ENCODE measurements at regions of chr1 and their contacts with region 1.

Region 1: GRCh38 chr1:30911046-30911954 is 2.7 kb upstream of the SDC3 start:
- DNase-seq: peak; percentile 78
- ATAC-seq: peak; percentile 70
- H3K4me3 ChIP-seq: no peak overlapping the region
- H3K27ac ChIP-seq: no peak overlapping the region
- H3K4me1 ChIP-seq: peaks cover 20% of the 10 kb centered on the region
- H3K27me3 ChIP-seq: no peaks in the 10 kb centered on the region
- CTCF ChIP-seq: peak; percentile 96
- POLR2A ChIP-seq: peak; percentile 62; the same call in 1 of the 2 replicates
- RAD21 ChIP-seq: peak; percentile 99

Region 2: GRCh38 chr1:30718636-30719405 is 192.5 kb before region 1 on chr1:
- CTCF ChIA-PET with region 1: interaction called, 4 read pairs
- POLR2A ChIA-PET with region 1: no interaction called
- dilution Hi-C with region 1: no loop called
- in situ Hi-C with region 1: no loop called
- intact Hi-C with region 1: loop called (anchors 1 kb)
- DNase-seq: peak; percentile 98
- ATAC-seq: peak; percentile 82
- H3K4me3 ChIP-seq: peak overlapping the region; percentile 50
- H3K27ac ChIP-seq: peak overlapping the region; percentile 84
- H3K4me1 ChIP-seq: peaks cover 4% of the 10 kb centered on the region; the same call in 1 of the 2 replicates
- H3K27me3 ChIP-seq: no peaks in the 10 kb centered on the region
- CTCF ChIP-seq: peak; percentile 88; the same call in 1 of the 2 replicates
- POLR2A ChIP-seq: peak; percentile 73
- RAD21 ChIP-seq: 0 out of 2 replicates have a peak, but pooled peaks have one; percentile 97

Region 3: DNA sequence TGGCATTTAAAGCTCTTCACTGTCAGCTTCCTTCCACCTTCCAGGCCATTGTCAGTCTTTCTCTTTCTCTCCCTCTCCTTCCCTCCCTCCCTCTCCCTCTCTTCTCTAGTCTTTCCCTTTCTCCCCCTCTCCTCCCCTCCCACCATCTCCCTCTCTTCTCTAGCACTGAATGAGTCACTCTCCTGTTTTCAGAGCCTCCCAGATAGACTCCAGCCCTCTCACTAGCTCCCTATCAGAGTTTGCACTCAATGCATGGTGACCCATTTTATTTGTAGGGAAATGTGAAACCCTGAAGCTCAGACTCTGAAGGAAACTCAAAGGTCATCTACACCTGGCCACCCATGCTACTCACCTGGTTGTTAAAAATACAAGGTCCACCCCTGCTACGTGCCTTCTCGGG is 183.5 kb before region 1 on chr1:
- CTCF ChIA-PET with region 1: no interaction called
- POLR2A ChIA-PET with region 1: no interaction called
- dilution Hi-C with region 1: no loop called
- in situ Hi-C with region 1: loop called (anchors 5 kb)
- intact Hi-C with region 1: no loop called
- DNase-seq: peak; percentile 66
- ATAC-seq: peak; percentile 94
- H3K4me3 ChIP-seq: no peak overlapping the region
- H3K27ac ChIP-seq: no peak overlapping the region
- H3K4me1 ChIP-seq: peaks cover 10% of the 10 kb centered on the region; the same call in 1 of the 2 replicates
- H3K27me3 ChIP-seq: peaks cover 7% of the 10 kb centered on the region; the same call in 1 of the 2 replicates
- CTCF ChIP-seq: no peak
- POLR2A ChIP-seq: no peak
- RAD21 ChIP-seq: no peak

Region 4: GRCh38 chr1:30779294-30780071 is 131.8 kb before region 1 on chr1:
- CTCF ChIA-PET with region 1: interaction called, 12 read pairs
- POLR2A ChIA-PET with region 1: no interaction called
- dilution Hi-C with region 1: no loop called
- in situ Hi-C with region 1: no loop called
- intact Hi-C with region 1: loop called (anchors 1 kb)
- DNase-seq: peak; percentile 48
- ATAC-seq: peak; percentile 74
- H3K4me3 ChIP-seq: no peak overlapping the region
- H3K27ac ChIP-seq: no peak overlapping the region
- H3K4me1 ChIP-seq: no peaks in the 10 kb centered on the region
- H3K27me3 ChIP-seq: no peaks in the 10 kb centered on the region; the same call in 1 of the 2 replicates
- CTCF ChIP-seq: peak; percentile 93
- POLR2A ChIP-seq: no peak
- RAD21 ChIP-seq: peak; percentile 84

Region 5: DNA sequence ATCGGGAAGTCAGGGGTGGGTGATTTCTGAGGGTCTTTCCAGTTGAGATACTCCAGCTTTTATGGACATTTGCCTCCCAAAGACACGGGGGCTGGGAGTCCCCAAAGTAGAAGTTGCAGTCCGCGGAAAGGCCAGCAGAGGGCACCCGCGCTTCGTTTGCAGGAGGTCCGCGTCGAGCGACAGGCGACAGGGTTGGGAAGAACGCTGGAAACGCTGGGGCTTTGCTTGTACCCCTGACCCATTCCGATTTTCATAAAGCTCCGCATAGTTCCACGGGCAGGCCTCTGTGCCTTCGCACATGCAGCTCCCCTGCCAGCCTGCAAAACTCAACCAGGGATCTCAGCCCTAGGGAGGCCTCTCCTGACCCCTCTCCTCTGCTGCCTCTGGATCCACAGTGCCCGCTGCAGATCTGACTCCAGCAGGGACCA is 109.5 kb before region 1 on chr1:
- CTCF ChIA-PET with region 1: interaction called, 122 read pairs
- POLR2A ChIA-PET with region 1: no interaction called
- dilution Hi-C with region 1: loop called (anchors 25 kb)
- in situ Hi-C with region 1: loop called (anchors 5 kb)
- intact Hi-C with region 1: loop called (anchors 1 kb)
- DNase-seq: peak; percentile 48
- ATAC-seq: peak; percentile 91
- H3K4me3 ChIP-seq: no peak overlapping the region
- H3K27ac ChIP-seq: no peak overlapping the region
- H3K4me1 ChIP-seq: peaks cover 9% of the 10 kb centered on the region; the same call in 1 of the 2 replicates
- H3K27me3 ChIP-seq: no peaks in the 10 kb centered on the region
- CTCF ChIP-seq: peak; percentile 96
- POLR2A ChIP-seq: peak; percentile 45; the same call in 1 of the 2 replicates
- RAD21 ChIP-seq: peak; percentile 98

Region 6: DNA sequence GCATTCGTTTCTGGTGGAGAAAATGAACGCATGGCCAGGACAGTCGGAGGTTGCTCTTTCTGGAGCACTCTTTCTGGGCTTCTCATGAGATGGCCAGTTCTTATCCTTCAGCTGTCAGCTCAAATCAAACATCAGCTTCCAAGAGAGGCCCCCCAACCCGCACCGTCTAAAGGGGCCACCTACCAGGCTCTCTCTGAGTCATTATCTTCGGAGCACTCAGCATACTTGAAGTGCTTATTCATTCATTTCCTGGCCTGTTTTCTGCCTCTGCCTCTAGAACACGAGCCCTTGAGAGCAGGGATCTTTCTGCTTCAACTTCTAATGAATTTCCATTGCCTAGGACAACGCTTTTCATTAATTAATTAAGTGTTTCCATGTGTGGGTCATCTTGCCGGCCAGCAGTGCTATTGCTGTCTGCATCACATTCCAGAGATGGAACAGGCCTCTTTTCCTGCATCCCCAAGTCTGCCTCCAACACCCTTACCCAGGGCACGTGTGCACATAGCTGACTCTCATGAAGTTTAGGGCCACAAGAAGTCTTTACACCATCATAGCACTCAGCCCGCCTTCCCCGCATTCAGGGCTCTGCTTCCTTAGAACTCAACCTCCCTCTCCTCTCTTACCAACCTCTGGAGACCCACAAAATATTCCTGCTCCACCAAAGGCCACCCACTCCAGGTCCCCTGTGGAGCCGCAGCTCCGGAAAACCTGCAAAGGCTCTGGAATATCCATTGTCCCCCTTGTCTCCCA is 101.6 kb before region 1 on chr1:
- CTCF ChIA-PET with region 1: interaction called, 122 read pairs
- POLR2A ChIA-PET with region 1: no interaction called
- dilution Hi-C with region 1: loop called (anchors 25 kb)
- in situ Hi-C with region 1: loop called (anchors 5 kb)
- intact Hi-C with region 1: no loop called
- DNase-seq: peak; percentile 93
- ATAC-seq: peak; percentile 91
- H3K4me3 ChIP-seq: no peak overlapping the region
- H3K27ac ChIP-seq: peak overlapping the region; percentile 79
- H3K4me1 ChIP-seq: peaks cover 29% of the 10 kb centered on the region
- H3K27me3 ChIP-seq: no peaks in the 10 kb centered on the region
- CTCF ChIP-seq: no peak
- POLR2A ChIP-seq: no peak
- RAD21 ChIP-seq: no peak; the same call in 1 of the 2 replicates

Region 7: GRCh38 chr1:30823969-30824735 is 87.1 kb before region 1 on chr1:
- CTCF ChIA-PET with region 1: interaction called, 8 read pairs
- POLR2A ChIA-PET with region 1: no interaction called
- dilution Hi-C with region 1: loop called (anchors 25 kb)
- in situ Hi-C with region 1: no loop called
- intact Hi-C with region 1: no loop called
- DNase-seq: peak; percentile 100
- ATAC-seq: peak; percentile 95
- H3K4me3 ChIP-seq: peak overlapping the region; percentile 57
- H3K27ac ChIP-seq: peak overlapping the region; percentile 88
- H3K4me1 ChIP-seq: peaks cover 20% of the 10 kb centered on the region
- H3K27me3 ChIP-seq: no peaks in the 10 kb centered on the region
- CTCF ChIP-seq: no peak
- POLR2A ChIP-seq: peak; percentile 68; the same call in 1 of the 2 replicates
- RAD21 ChIP-seq: peak; percentile 40

Region 8: DNA sequence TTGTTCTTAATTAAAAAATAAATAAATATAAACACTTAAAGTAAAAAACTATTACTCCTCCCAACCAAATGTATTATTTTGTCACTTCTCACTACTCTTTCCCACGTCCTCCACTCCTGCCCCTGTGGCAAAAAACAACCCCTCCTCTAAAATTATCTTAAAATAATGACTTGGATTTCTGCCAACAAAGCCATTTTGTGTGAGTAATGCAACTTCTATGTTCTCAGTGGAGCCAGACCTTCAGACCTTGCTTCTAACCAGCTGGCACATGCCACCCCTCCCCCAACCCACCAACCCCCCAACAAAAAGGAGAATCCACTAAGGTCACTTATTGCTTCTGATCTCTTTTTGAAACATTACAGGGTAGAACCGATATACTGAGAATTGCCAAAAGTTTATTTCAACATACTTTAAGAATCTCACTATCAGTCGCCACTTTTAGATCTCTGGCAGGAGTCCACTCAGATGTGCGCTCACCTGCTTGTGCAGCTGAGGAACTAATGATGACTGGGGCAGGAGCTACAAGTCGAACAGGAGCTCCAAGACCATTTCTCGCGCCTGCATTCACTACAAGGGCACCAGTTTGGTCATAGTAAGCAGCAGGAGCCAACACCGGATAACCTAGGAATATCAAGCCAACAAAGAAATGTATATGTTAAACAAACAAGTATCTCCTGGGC is 55.5 kb after region 1 on chr1:
- CTCF ChIA-PET with region 1: no interaction called
- POLR2A ChIA-PET with region 1: no interaction called
- dilution Hi-C with region 1: no loop called
- in situ Hi-C with region 1: no loop called
- intact Hi-C with region 1: no loop called
- DNase-seq: peak; percentile 70
- ATAC-seq: peak; percentile 69
- H3K4me3 ChIP-seq: no peak overlapping the region
- H3K27ac ChIP-seq: peak overlapping the region; percentile 18; the same call in 1 of the 2 replicates
- H3K4me1 ChIP-seq: peaks cover 13% of the 10 kb centered on the region
- H3K27me3 ChIP-seq: no peaks in the 10 kb centered on the region
- CTCF ChIP-seq: no peak
- POLR2A ChIP-seq: no peak
- RAD21 ChIP-seq: no peak